ENCODE measurements at regions of chr2 and their contacts with region 1.

Region 1: GRCh38 chr2:79103214-79103613 is 15.4 kb upstream of the REG1B start:
- DNase-seq: no peak
- ATAC-seq: no peak

Region 2: GRCh38 chr2:78654941-78655340 is 448.3 kb before region 1 on chr2:
- intact Hi-C with region 1: no loop called
- DNase-seq: no peak
- ATAC-seq: no peak

Region 3: GRCh38 chr2:79116997-79117928 is 14.0 kb after region 1 on chr2:
- intact Hi-C with region 1: loop called in 1 of 2 experiments (anchors 2 kb)
- DNase-seq: no peak
- ATAC-seq: no peak

Region 4: DNA sequence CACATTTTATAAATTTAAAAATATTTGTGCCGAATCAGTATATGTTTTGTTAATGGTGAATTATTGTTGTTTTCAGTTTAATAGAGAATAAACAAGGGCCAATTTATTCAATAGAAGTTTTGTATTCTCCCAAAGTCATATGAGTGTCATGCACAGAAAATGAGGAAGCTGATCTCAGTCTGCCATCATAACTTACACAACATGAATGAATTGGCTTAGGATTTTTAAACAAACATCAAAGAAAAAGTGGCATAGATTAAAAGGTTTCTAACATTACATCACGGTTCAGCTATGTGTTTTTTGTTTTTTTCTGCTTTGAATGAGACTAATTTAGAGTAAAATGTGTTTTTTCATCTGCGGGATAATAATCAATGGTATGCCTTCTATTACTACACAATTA is 286.3 kb after region 1 on chr2:
- intact Hi-C with region 1: no loop called
- DNase-seq: no peak
- ATAC-seq: no peak

Region 5: GRCh38 chr2:80621656-80622055 is 1518.4 kb after region 1 on chr2:
- intact Hi-C with region 1: no loop called
- DNase-seq: no peak
- ATAC-seq: no peak

Measured in left cardiac atrium (tissue), 4 donors.